HepG2 (cell line): ENCODE measurements at regions of chr12 and their contacts with region 1.

Region 1: DNA sequence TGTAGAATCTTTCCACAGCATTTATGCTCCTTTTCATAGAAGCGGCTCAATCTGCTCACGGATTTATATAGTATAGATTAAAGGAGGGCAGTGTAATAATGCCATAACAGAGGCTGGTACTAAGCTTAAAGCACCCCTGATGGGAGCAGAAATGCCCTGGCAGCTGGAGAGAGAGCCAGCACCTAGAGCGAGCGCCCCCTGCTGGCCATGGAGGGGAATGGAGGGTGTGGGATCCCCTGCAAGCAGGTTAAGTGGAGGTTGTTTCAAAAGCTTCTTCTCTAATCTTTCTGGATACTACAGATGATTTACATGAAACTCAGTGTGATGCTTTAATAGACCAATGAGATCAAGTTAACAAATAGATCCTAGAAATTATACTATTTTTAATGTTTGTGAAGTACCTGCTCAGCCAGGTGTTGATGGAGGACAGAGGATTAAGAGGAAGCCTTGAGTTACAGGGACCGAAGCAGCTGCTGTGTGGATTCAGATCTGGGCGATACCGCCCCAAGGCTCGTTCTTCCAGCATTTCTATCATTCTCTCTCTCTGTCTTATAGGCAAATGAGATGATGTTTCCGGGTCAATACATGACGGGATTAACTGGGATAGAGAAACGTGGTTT is 1519.3 kb upstream of the TMEM132C start:
- DNase-seq: peak; percentile 9
- ATAC-seq: peak; percentile 87
- H3K4me3 ChIP-seq: no peak overlapping the region
- H3K27ac ChIP-seq: no peak overlapping the region
- H3K4me1 ChIP-seq: no peaks in the 10 kb centered on the region
- H3K27me3 ChIP-seq: no peaks in the 10 kb centered on the region
- CTCF ChIP-seq: peak; percentile 75
- EP300 ChIP-seq: no peak
- POLR2A ChIP-seq: no peak
- RAD21 ChIP-seq: no peak

Region 2: DNA sequence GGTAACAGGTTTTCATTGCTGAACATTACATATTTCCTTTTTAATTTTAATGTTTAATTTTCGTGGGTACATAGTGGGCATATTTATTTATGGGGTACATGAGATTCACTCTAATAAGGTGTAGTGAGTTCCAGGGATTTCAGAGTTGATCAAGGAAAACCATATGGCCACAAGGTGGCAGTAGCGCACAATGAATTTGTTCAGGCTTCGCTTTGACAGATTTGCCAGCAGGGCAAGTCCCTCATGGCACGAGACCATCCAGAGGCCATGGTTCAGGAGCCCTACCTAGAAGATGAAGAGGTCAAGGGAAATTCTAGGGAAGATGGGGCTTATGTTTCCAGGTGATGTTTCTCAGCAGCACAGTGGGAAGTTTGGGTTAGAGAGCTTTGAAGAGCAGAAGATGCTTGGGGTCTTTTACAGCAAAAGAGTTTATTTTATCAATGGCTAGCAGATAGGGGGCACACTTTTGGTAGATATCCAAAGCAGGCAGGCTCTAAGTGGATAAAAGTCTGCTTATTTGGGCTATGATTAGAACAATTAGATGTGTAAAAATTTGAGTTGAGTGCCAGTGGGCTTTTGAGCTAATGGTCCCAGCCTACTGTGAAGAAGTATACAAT is 678.0 kb before region 1 on chr12:
- CTCF ChIA-PET with region 1: no interaction called
- POLR2A ChIA-PET with region 1: no interaction called
- in situ Hi-C with region 1: no loop called
- intact Hi-C with region 1: loop called (anchors 2 kb)
- DNase-seq: peak; percentile 33
- ATAC-seq: peak; percentile 43; the same call in 2 of the 3 replicates
- H3K4me3 ChIP-seq: no peak overlapping the region
- H3K27ac ChIP-seq: no peak overlapping the region
- H3K4me1 ChIP-seq: no peaks in the 10 kb centered on the region
- H3K27me3 ChIP-seq: no peaks in the 10 kb centered on the region
- CTCF ChIP-seq: peak; percentile 69
- EP300 ChIP-seq: no peak
- POLR2A ChIP-seq: no peak
- RAD21 ChIP-seq: peak; percentile 59

Region 3: GRCh38 chr12:127189992-127190391 is 442.4 kb after region 1 on chr12:
- CTCF ChIA-PET with region 1: no interaction called
- POLR2A ChIA-PET with region 1: no interaction called
- in situ Hi-C with region 1: no loop called
- intact Hi-C with region 1: loop called (anchors 5 kb)
- DNase-seq: no peak
- ATAC-seq: no peak
- H3K4me3 ChIP-seq: no peak overlapping the region
- H3K27ac ChIP-seq: no peak overlapping the region
- H3K4me1 ChIP-seq: no peaks in the 10 kb centered on the region
- H3K27me3 ChIP-seq: no peaks in the 10 kb centered on the region
- CTCF ChIP-seq: no peak
- EP300 ChIP-seq: no peak
- POLR2A ChIP-seq: no peak
- RAD21 ChIP-seq: no peak